Breast epithelium (tissue), 4 donors: ENCODE measurements at regions of chr10 and their contacts with region 1.

Region 1: GRCh38 chr10:6202684-6203330 is at the start of gene PFKFB3:
- DNase-seq: peak; percentile 93 to 96
- H3K4me3 ChIP-seq: peak within 1 kb of the TSS; percentile 76 to 89 (median 83)
- H3K27ac ChIP-seq: peak within 1 kb of the TSS; percentile 90 to 95
- H3K4me1 ChIP-seq: peaks cover 12 to 19% of the 10 kb centered on the region in 2 donors
- H3K27me3 ChIP-seq: no peaks in the 10 kb centered on the region
- CTCF ChIP-seq: peak; percentile 95 to 98 (median 98)
- POLR2A ChIP-seq: peak; percentile 94
- total RNA-seq, gene PFKFB3: 94.8 to 240 (median 144) TPM

Region 2: DNA sequence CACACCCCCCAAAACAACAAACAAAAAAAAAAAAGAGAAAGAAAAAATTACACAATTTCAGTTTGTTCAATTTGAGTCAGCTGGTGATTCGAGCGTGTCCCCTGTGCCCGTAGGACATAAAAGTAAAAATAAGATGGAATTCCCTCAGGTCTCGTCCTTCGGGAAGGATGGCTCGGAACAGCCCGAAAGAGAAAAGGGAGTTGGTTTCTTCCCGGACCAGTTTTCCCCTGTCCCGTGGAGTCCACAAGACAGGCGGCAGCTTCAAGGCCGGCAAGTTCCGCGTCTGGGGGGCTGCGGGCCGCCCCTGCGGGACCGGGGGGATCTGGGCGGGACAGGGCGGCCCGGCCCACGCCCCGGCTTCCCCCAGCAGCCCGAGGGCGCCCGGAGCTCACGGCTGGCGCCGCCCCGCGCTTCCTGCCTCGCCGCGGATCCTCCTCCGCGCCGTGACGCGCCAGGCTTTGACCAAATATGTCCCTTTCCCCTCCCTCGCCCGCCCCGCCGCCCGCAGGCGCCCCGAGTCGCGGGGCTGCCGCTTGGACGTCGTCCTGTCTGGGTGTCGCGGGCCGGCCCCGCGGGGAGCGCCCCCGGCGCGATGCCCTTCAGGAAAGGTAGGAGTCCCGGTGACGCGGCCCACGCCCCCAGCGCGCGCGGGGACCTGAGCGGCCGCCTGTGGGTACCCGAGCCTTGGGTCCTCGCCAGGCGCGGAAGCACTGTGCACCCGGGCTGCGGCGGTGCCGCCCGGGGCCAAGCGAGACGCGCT is 58.2 kb before region 1 on chr10:
- intact Hi-C with region 1: loop called (anchors 5 kb)
- DNase-seq: peak; percentile 83 to 84
- H3K4me3 ChIP-seq: peak overlapping the region; percentile 73 to 81 (median 75)
- H3K27ac ChIP-seq: peak overlapping the region; percentile 82 to 95
- H3K4me1 ChIP-seq: no peaks in the 10 kb centered on the region
- H3K27me3 ChIP-seq: no peaks in the 10 kb centered on the region
- CTCF ChIP-seq: no peak
- POLR2A ChIP-seq: no peak

Region 3: DNA sequence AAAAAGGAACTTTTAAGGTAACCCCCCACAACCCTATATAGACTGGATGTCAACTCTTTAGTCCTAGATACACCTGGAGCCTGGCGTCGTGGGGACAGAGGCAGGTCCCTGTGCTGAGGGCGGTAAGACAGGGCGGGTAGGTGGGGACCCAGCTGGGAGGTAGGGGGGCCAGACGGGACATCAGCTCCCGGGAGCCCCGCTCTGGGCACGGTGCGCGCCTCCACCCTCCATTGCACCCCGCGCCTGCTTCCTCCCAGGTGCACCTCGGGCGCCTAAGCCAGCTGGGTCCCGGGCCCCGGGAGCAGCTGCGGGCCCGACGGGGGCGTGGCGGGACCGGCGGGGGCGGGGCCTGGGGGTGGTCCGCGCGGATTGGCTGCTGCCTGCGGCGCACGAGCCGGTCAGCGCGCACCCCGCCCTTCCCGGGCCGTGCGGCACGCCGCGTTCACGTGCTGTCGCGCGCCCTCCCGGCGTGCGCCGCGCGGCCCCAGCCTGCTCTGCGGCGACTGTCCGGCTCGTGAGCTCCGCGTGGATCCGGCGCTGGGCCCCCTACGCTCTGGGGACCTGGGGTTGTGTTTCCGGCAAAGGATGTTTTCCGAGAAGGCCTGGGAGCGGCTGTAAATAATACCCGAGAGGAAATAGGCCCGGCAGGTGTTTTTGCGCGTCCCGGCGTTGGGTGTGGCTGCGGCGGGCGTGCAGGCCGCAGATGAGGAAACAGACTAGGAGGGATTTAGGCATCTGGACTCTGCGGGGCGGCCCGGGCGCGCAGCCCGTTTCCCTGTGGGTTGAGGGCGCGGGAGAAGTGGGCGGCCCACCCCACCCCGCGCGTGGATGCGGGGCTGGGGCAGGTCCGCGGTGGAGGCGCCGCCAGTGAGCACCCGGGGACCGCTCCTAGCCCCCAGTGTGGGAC is 39.2 kb before region 1 on chr10:
- intact Hi-C with region 1: loop called (anchors 5 kb)
- DNase-seq: peak; percentile 86 to 89
- H3K4me3 ChIP-seq: peak overlapping the region; percentile 59 to 92 (median 70)
- H3K27ac ChIP-seq: peak overlapping the region; percentile 94 to 98
- H3K4me1 ChIP-seq: peaks cover 4 to 12% of the 10 kb centered on the region in 2 donors
- H3K27me3 ChIP-seq: no peaks in the 10 kb centered on the region
- CTCF ChIP-seq: no peak
- POLR2A ChIP-seq: peak; percentile 53

Region 4: DNA sequence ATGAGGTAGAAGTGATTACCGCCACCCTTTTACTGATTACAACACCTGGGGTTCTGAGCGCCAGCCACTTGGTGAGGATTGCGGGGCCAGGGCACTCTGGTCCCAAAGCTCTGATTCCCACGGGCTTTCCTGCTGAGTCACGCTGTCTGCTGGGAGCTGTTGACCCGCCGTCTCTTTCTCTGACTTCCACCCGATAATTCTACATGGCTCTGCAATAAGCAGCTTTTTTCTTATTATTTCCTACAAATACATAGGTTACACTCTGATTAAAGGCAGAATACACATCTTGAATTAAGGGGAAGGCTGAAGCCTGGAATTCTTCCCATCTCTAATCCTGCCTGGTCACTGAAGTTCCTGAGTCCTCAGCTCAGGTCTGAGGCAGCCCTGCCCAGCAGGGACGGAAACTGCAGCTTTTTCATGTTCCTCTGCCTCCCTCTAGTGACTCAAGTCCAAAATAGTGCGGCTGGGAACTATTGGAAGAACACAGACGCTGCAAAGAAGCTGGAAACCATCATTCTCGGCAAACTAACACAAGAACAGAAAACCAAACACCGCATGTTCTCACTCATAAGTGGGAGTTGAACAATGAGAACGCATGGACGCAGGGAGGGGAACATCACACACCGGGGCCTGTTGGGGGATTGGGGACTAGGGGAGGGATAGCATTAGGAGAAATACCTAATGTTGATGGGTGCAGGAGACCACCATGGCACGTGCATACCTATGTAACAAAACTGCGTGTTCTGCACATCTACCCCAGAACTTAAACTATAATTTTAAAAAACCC is 198.9 kb after region 1 on chr10:
- intact Hi-C with region 1: loop called (anchors 10 kb)
- DNase-seq: peak; percentile 73 to 79
- H3K4me3 ChIP-seq: peak overlapping the region; percentile 15 to 52 (median 37)
- H3K27ac ChIP-seq: peak overlapping the region in 1 of 2 donors; percentile 33
- H3K4me1 ChIP-seq: peaks cover 0 to 6% of the 10 kb centered on the region in 2 donors
- H3K27me3 ChIP-seq: no peaks in the 10 kb centered on the region
- CTCF ChIP-seq: peak; percentile 79 to 90 (median 82)
- POLR2A ChIP-seq: no peak